ENCODE measurements at regions of chr20 and their contacts with region 1.

Region 1: GRCh38 chr20:36712775-36713174 is 33.1 kb downstream of the NDRG3 start:
- DNase-seq: no peak
- ATAC-seq: no peak
- H3K4me3 ChIP-seq: no peak overlapping the region
- H3K27ac ChIP-seq: no peak overlapping the region
- H3K4me1 ChIP-seq: no peaks in the 10 kb centered on the region
- H3K27me3 ChIP-seq: no peaks in the 10 kb centered on the region
- CTCF ChIP-seq: no peak

Region 2: GRCh38 chr20:36700438-36700837 is 12.3 kb before region 1 on chr20:
- CTCF ChIA-PET with region 1: no interaction called
- POLR2A ChIA-PET with region 1: interaction called, 12 read pairs
- in situ Hi-C with region 1: no loop called
- intact Hi-C with region 1: no loop called
- DNase-seq: no peak
- ATAC-seq: no peak
- H3K4me3 ChIP-seq: no peak overlapping the region
- H3K27ac ChIP-seq: no peak overlapping the region
- H3K4me1 ChIP-seq: no peaks in the 10 kb centered on the region
- H3K27me3 ChIP-seq: no peaks in the 10 kb centered on the region
- CTCF ChIP-seq: no peak

Region 3: DNA sequence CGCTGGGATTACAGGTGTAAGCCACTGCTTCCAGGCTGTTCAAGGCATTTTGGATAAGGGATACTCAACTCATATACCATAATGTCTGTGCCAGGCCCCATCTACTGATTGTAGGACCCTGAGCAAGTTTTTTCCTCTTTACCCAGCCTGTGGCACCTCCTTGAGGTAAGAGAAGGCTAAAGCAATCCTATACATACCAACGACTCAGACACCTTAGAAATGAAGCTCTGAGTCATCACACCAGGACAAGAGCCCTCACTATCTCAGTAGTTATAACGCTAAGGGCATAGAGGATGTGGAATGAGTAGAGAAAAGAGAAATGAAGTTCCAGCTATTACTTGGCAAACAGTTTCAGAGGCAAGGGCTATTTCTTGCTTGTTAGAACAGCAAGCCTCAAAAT is 16.2 kb after region 1 on chr20:
- CTCF ChIA-PET with region 1: no interaction called
- POLR2A ChIA-PET with region 1: no interaction called
- in situ Hi-C with region 1: no loop called
- intact Hi-C with region 1: no loop called
- DNase-seq: no peak
- ATAC-seq: peak; percentile 72; the same call in 1 of the 2 replicates
- H3K4me3 ChIP-seq: no peak overlapping the region
- H3K27ac ChIP-seq: no peak overlapping the region
- H3K4me1 ChIP-seq: no peaks in the 10 kb centered on the region
- H3K27me3 ChIP-seq: no peaks in the 10 kb centered on the region
- CTCF ChIP-seq: no peak